CD8-positive, alpha-beta T cell (primary cell): ENCODE measurements at regions of chr18 and their contacts with region 1.

Region 1: GRCh38 chr18:75247611-75248421 is 37.2 kb downstream of the TSHZ1 start:
- DNase-seq: peak in 2 of 9 experiments; percentile 50 to 72
- ATAC-seq: peak; percentile 43
- H3K4me3 ChIP-seq: peak overlapping the region; percentile 34 to 36
- H3K4me3 Mint-ChIP-seq: peak overlapping the region; percentile 85
- H3K27ac ChIP-seq: peak overlapping the region; percentile 36 to 67
- H3K27ac Mint-ChIP-seq: peak overlapping the region; percentile 94
- H3K4me1 ChIP-seq: peaks cover 48% of the 10 kb centered on the region
- H3K4me1 Mint-ChIP-seq: peaks cover 80% of the 10 kb centered on the region
- H3K27me3 ChIP-seq: no peaks in the 10 kb centered on the region
- H3K27me3 Mint-ChIP-seq: no peaks in the 10 kb centered on the region
- CTCF ChIP-seq: no peak

Region 2: GRCh38 chr18:74147779-74148542 is 1099.9 kb before region 1 on chr18 and contains the starts of genes FBXO15 and TIMM21:
- CTCF ChIA-PET with region 1: no interaction called
- POLR2A ChIA-PET with region 1: interaction called, 4 read pairs
- intact Hi-C with region 1: loop called in 1 of 2 experiments (anchors 10 kb)
- DNase-seq: peak; percentile 89 to 99 (median 96)
- ATAC-seq: peak; percentile 83
- H3K4me3 ChIP-seq: peak within 1 kb of the TSS; percentile 84 to 91
- H3K4me3 Mint-ChIP-seq: peak within 1 kb of the TSS; percentile 90
- H3K27ac ChIP-seq: peak within 1 kb of the TSS; percentile 92 to 99
- H3K27ac Mint-ChIP-seq: peak within 1 kb of the TSS; percentile 92
- H3K4me1 ChIP-seq: peaks cover 21% of the 10 kb centered on the region
- H3K4me1 Mint-ChIP-seq: peaks cover 53% of the 10 kb centered on the region
- H3K27me3 ChIP-seq: no peaks in the 10 kb centered on the region
- H3K27me3 Mint-ChIP-seq: no peaks in the 10 kb centered on the region
- CTCF ChIP-seq: no peak
- total RNA-seq, gene FBXO15: 1.0 to 1.3 TPM
- total RNA-seq, gene TIMM21: 20.2 to 20.8 TPM

Region 3: DNA sequence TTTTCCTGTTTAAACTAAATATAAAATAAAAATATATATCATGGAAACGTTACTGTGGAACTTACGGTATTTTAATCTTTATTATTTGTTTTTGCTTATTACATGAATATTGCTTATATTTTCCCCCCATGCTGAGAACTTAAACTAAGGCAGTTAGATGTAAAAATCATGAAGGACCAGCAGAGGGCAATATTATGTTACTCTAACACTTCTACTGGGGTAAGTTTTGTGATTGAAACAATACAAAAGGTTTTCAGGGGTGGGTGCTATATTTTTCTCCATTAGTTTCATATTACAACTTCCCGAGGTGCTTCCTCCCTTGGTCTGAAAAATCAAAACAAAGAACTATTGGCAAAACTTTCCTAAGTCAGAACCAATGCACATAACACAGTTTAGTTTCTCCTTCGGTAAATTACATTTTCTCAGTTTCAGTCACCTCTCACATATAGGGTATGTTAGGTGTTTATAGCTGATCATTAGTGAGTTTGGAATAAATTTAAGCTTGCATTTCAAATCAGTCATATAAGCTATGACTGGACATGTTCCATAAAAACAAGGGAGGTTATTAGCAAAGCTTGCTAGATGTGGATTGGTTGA is 595.3 kb before region 1 on chr18:
- CTCF ChIA-PET with region 1: interaction called, 3 read pairs
- POLR2A ChIA-PET with region 1: no interaction called
- intact Hi-C with region 1: loop called (anchors 10 kb)
- DNase-seq: peak in 2 of 9 experiments; percentile 48 to 59
- ATAC-seq: no peak
- H3K4me3 ChIP-seq: no peak overlapping the region
- H3K4me3 Mint-ChIP-seq: no peak overlapping the region
- H3K27ac ChIP-seq: no peak overlapping the region
- H3K27ac Mint-ChIP-seq: no peak overlapping the region
- H3K4me1 ChIP-seq: no peaks in the 10 kb centered on the region
- H3K4me1 Mint-ChIP-seq: no peaks in the 10 kb centered on the region
- H3K27me3 ChIP-seq: no peaks in the 10 kb centered on the region
- H3K27me3 Mint-ChIP-seq: no peaks in the 10 kb centered on the region
- CTCF ChIP-seq: peak; percentile 82

Region 4: GRCh38 chr18:75070625-75071483 is 177.0 kb before region 1 on chr18:
- CTCF ChIA-PET with region 1: interaction called, 3 read pairs
- POLR2A ChIA-PET with region 1: interaction called, 5 read pairs
- intact Hi-C with region 1: loop called in 1 of 2 experiments (anchors 2 kb)
- DNase-seq: peak; percentile 19 to 88 (median 74)
- ATAC-seq: peak; percentile 90
- H3K4me3 ChIP-seq: peak overlapping the region; percentile 9 to 46
- H3K4me3 Mint-ChIP-seq: peak overlapping the region; percentile 80
- H3K27ac ChIP-seq: peak overlapping the region; percentile 50 to 86
- H3K27ac Mint-ChIP-seq: peak overlapping the region; percentile 97
- H3K4me1 ChIP-seq: peaks cover 28% of the 10 kb centered on the region
- H3K4me1 Mint-ChIP-seq: peaks cover 41% of the 10 kb centered on the region
- H3K27me3 ChIP-seq: no peaks in the 10 kb centered on the region
- H3K27me3 Mint-ChIP-seq: no peaks in the 10 kb centered on the region
- CTCF ChIP-seq: no peak

Region 5: GRCh38 chr18:75226286-75226955 is 21.4 kb before region 1 on chr18:
- CTCF ChIA-PET with region 1: interaction called, 8 read pairs
- POLR2A ChIA-PET with region 1: interaction called, 5 read pairs
- intact Hi-C with region 1: loop called in 1 of 2 experiments (anchors 2 kb)
- DNase-seq: no peak
- ATAC-seq: no peak
- H3K4me3 ChIP-seq: no peak overlapping the region
- H3K4me3 Mint-ChIP-seq: peak overlapping the region; percentile 38
- H3K27ac ChIP-seq: no peak overlapping the region
- H3K27ac Mint-ChIP-seq: peak overlapping the region; percentile 47
- H3K4me1 ChIP-seq: peaks cover 57% of the 10 kb centered on the region
- H3K4me1 Mint-ChIP-seq: peaks cover 76% of the 10 kb centered on the region
- H3K27me3 ChIP-seq: no peaks in the 10 kb centered on the region
- H3K27me3 Mint-ChIP-seq: no peaks in the 10 kb centered on the region
- CTCF ChIP-seq: no peak